GM12878 (cell line): ENCODE measurements at regions of chr5 and their contacts with region 1.

Region 1: DNA sequence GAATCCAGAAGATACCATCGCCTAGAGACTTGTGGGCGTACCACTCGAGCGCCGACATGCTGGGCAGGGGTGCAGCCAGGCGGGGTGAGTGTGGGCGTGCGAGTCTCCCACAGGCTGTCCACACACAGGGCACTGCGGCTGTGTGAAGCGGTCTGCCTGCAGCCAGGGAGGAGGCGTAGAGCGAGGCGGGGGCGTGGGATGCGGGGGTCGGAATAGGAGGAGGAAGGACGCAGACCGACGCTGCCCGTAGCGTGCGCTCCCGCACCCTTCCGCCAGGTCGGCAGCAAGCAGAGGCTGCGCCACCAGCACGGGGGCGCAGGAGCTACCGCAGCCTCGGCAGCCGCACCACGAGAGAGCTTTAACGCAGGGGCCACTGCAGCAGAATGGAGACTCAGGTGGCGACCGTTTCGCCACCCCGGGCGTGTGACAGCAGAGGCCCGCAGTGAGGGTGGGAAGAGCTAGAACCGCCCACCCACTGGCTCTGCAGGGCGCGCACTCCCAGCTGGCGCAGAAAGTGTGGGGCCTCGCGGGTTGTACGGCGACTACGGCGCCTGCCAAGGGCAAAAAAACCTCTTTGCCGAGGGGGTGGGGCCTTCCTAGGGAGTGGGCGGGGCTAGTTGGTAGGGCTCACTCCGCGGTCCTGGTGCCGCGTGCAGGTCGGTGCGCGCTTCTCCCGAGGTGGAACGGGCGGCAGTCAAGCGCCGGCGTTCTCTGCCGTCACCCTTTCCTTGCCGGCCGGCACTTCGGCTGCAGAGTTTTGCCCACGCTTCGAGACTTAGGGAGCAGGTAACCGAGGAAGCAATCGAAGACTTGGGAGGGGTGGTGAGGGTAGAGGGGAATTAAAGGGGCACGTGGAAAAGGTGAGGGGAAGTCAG is at the starts of genes MBLAC2 and POLR3G:
- DNase-seq: peak; percentile 77
- ATAC-seq: peak; percentile 86
- H3K4me3 ChIP-seq: peak within 1 kb of the TSS; percentile 89
- H3K27ac ChIP-seq: peak within 1 kb of the TSS; percentile 76
- H3K4me1 ChIP-seq: peaks cover 3% of the 10 kb centered on the region; the same call in 1 of the 2 replicates
- H3K27me3 ChIP-seq: no peaks in the 10 kb centered on the region
- CTCF ChIP-seq: peak in 2 of 3 experiments; percentile 13 to 53; a peak in 4 of 6 replicates
- EP300 ChIP-seq: 0 out of 4 replicates have a peak, but pooled peaks of 1 of the 2 experiments have one; percentile 7
- POLR2A ChIP-seq: peak; percentile 83
- RAD21 ChIP-seq: no peak
- polyA plus RNA-seq, gene MBLAC2: 2.0 to 2.8 TPM
- polyA plus RNA-seq, gene POLR3G: 42.1 to 50.9 TPM

Region 2: GRCh38 chr5:90409318-90410177 is 64.9 kb before region 1 on chr5 and contains the start of gene CETN3:
- CTCF ChIA-PET with region 1: interaction called, 4 read pairs
- POLR2A ChIA-PET with region 1: interaction called, 21 read pairs
- RAD21 ChIA-PET with region 1: interaction called, 3 read pairs
- SMC1A ChIA-PET with region 1: interaction called, 10 read pairs
- in situ Hi-C with region 1: no loop called
- intact Hi-C with region 1: loop called (anchors 2 kb)
- DNase-seq: peak; percentile 88
- ATAC-seq: peak; percentile 94
- H3K4me3 ChIP-seq: peak within 1 kb of the TSS; percentile 89
- H3K27ac ChIP-seq: peak within 1 kb of the TSS; percentile 97
- H3K4me1 ChIP-seq: no peaks in the 10 kb centered on the region
- H3K27me3 ChIP-seq: no peaks in the 10 kb centered on the region
- CTCF ChIP-seq: no peak
- EP300 ChIP-seq: peak in 1 of 2 experiments; percentile 44; a peak in 1 of 4 replicates
- POLR2A ChIP-seq: peak; percentile 93
- RAD21 ChIP-seq: no peak
- polyA plus RNA-seq, gene CETN3: 54.6 to 59.1 TPM

Region 3: GRCh38 chr5:90434116-90434714 is 40.3 kb before region 1 on chr5:
- CTCF ChIA-PET with region 1: interaction called, 12 read pairs
- POLR2A ChIA-PET with region 1: no interaction called
- RAD21 ChIA-PET with region 1: no interaction called
- SMC1A ChIA-PET with region 1: interaction called, 10 read pairs
- in situ Hi-C with region 1: no loop called
- intact Hi-C with region 1: no loop called
- DNase-seq: no peak
- ATAC-seq: peak; percentile 92
- H3K4me3 ChIP-seq: no peak overlapping the region
- H3K27ac ChIP-seq: no peak overlapping the region
- H3K4me1 ChIP-seq: 0 out of 2 replicates have a peak, but pooled peaks cover 5% of the 10 kb centered on the region
- H3K27me3 ChIP-seq: no peaks in the 10 kb centered on the region
- CTCF ChIP-seq: peak; percentile 65 to 75 (median 68)
- EP300 ChIP-seq: no peak
- POLR2A ChIP-seq: no peak
- RAD21 ChIP-seq: peak; percentile 72

Region 4: DNA sequence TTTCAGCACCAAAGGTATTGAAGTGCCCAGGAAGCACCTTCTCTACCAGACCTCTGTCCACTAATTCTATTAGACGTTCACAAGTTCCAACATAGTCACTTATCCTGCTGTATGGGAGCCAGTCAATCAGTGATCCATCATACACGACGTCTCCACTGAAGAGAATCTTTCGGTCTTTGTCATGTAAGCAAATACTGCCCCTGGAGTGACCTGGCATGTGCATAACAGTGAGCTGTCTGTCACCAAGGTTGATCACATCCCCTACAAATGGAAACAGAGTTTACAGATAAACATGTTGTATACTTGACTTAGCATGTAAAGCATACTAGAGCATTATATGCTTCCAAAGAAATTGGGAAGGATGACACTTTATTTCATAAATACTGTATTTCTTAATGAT is 13.2 kb before region 1 on chr5:
- CTCF ChIA-PET with region 1: interaction called, 10 read pairs
- POLR2A ChIA-PET with region 1: interaction called, 6 read pairs
- RAD21 ChIA-PET with region 1: no interaction called
- SMC1A ChIA-PET with region 1: interaction called, 9 read pairs
- in situ Hi-C with region 1: no loop called
- intact Hi-C with region 1: no loop called
- DNase-seq: no peak
- ATAC-seq: no peak
- H3K4me3 ChIP-seq: no peak overlapping the region
- H3K27ac ChIP-seq: no peak overlapping the region
- H3K4me1 ChIP-seq: no peaks in the 10 kb centered on the region
- H3K27me3 ChIP-seq: no peaks in the 10 kb centered on the region
- CTCF ChIP-seq: no peak
- EP300 ChIP-seq: no peak
- POLR2A ChIP-seq: no peak
- RAD21 ChIP-seq: no peak

Region 5: GRCh38 chr5:90529194-90529938 is 54.9 kb after region 1 on chr5 and contains the start of gene LYSMD3:
- CTCF ChIA-PET with region 1: interaction called, 30 read pairs
- POLR2A ChIA-PET with region 1: interaction called, 15 read pairs
- RAD21 ChIA-PET with region 1: interaction called, 37 read pairs
- SMC1A ChIA-PET with region 1: interaction called, 9 read pairs
- in situ Hi-C with region 1: no loop called
- intact Hi-C with region 1: loop called (anchors 1 kb)
- DNase-seq: peak; percentile 89
- ATAC-seq: peak; percentile 95
- H3K4me3 ChIP-seq: peak within 1 kb of the TSS; percentile 76
- H3K27ac ChIP-seq: peak within 1 kb of the TSS; percentile 86
- H3K4me1 ChIP-seq: no peaks in the 10 kb centered on the region
- H3K27me3 ChIP-seq: no peaks in the 10 kb centered on the region
- CTCF ChIP-seq: no peak
- EP300 ChIP-seq: peak in 1 of 2 experiments; percentile 20; a peak in 1 of 4 replicates
- POLR2A ChIP-seq: peak; percentile 97
- RAD21 ChIP-seq: no peak
- polyA plus RNA-seq, gene LYSMD3: 3.9 to 6.0 TPM